ENCODE measurements at regions of chr1 and their contacts with region 1.

Region 1: GRCh38 chr1:153532769-153533599 is 2.8 kb downstream of the S100A6 start:
- DNase-seq: peak; percentile 94
- ATAC-seq: peak; percentile 73

Region 2: GRCh38 chr1:153568367-153569099 is 35.5 kb after region 1 on chr1:
- intact Hi-C with region 1: loop called (anchors 5 kb)
- DNase-seq: peak; percentile 96
- ATAC-seq: peak; percentile 60

Measured in sciatic nerve (tissue), 2 donors.